Transverse colon (tissue), 4 donors: ENCODE measurements at regions of chr10 and their contacts with region 1.

Region 1: GRCh38 chr10:132023092-132023811 is 41.5 kb upstream of the BNIP3 start:
- DNase-seq: peak; percentile 84
- H3K4me3 ChIP-seq: peak overlapping the region; percentile 0 to 41 (median 11)
- H3K27ac ChIP-seq: no peak overlapping the region
- H3K4me1 ChIP-seq: peaks cover 0 to 8% (median 3%) of the 10 kb centered on the region in 4 donors
- H3K27me3 ChIP-seq: peaks cover 43% of the 10 kb centered on the region
- CTCF ChIP-seq: peak; percentile 82 to 88 (median 84)
- EP300 ChIP-seq: no peak
- POLR2A ChIP-seq: no peak

Region 2: GRCh38 chr10:131899695-131900349 is 123.4 kb before region 1 on chr10:
- in situ Hi-C with region 1: loop called in 1 of 4 experiments (anchors 10 kb)
- intact Hi-C with region 1: no loop called
- DNase-seq: no peak
- H3K4me3 ChIP-seq: peak overlapping the region; percentile 37 to 99 (median 94)
- H3K27ac ChIP-seq: peak overlapping the region; percentile 91 to 100 (median 98)
- H3K4me1 ChIP-seq: peaks cover 12 to 38% (median 29%) of the 10 kb centered on the region in 4 donors
- H3K27me3 ChIP-seq: peaks cover 36% of the 10 kb centered on the region
- CTCF ChIP-seq: peak in 1 of 5 experiments; percentile 27
- EP300 ChIP-seq: no peak
- POLR2A ChIP-seq: no peak

Region 3: DNA sequence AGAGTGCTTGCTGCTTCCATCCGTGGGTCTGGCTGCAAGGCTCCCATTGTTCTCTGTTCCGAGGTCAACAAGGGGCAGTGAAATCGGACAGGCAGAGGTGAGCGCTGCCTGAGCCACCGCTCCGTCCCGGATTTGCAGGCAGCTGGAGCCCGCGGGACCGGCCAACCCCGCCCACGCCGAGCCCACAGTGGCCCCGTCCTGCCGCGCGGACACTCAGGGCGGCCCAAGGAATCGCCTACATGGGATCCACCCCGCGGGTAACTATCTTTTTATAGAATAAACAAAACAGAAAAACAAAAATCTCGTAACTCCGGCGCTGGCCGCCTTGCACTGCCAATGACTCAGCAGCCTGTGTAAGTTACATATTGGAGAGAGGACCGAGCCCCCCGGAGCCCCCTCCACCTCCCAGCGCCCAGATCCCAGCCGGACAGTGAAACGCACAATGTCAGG is 43.4 kb before region 1 on chr10:
- in situ Hi-C with region 1: no loop called
- intact Hi-C with region 1: loop called (anchors 2 kb)
- DNase-seq: no peak
- H3K4me3 ChIP-seq: peak overlapping the region in 3 of 4 donors; percentile 5 to 78 (median 13)
- H3K27ac ChIP-seq: no peak overlapping the region
- H3K4me1 ChIP-seq: peaks cover 4 to 26% (median 18%) of the 10 kb centered on the region in 4 donors
- H3K27me3 ChIP-seq: peaks cover 38% of the 10 kb centered on the region
- CTCF ChIP-seq: no peak
- EP300 ChIP-seq: no peak
- POLR2A ChIP-seq: no peak

Region 4: GRCh38 chr10:132076578-132077081 is 53.4 kb after region 1 on chr10:
- in situ Hi-C with region 1: no loop called
- intact Hi-C with region 1: no loop called
- DNase-seq: no peak
- H3K4me3 ChIP-seq: no peak overlapping the region
- H3K27ac ChIP-seq: no peak overlapping the region
- H3K4me1 ChIP-seq: no peaks in the 10 kb centered on the region
- H3K27me3 ChIP-seq: peaks cover 3% of the 10 kb centered on the region
- CTCF ChIP-seq: no peak
- EP300 ChIP-seq: no peak
- POLR2A ChIP-seq: no peak